Kidney (tissue), 22 donors: ENCODE measurements at regions of chr9 and their contacts with region 1.

Region 1: GRCh38 chr9:110638381-110638954 is 30.1 kb upstream of the MUSK start:
- DNase-seq: peak in 1 of 5 donors; percentile 39
- H3K4me3 ChIP-seq: no peak overlapping the region
- H3K27ac ChIP-seq: no peak overlapping the region
- H3K4me1 ChIP-seq: no peaks in the 10 kb centered on the region
- H3K27me3 ChIP-seq: no peaks in the 10 kb centered on the region
- CTCF ChIP-seq: peak; percentile 28

Region 2: GRCh38 chr9:110571801-110572485 is 66.5 kb before region 1 on chr9:
- intact Hi-C with region 1: no loop called
- DNase-seq: no peak
- H3K4me3 ChIP-seq: no peak overlapping the region
- H3K27ac ChIP-seq: no peak overlapping the region
- H3K4me1 ChIP-seq: no peaks in the 10 kb centered on the region
- H3K27me3 ChIP-seq: no peaks in the 10 kb centered on the region
- CTCF ChIP-seq: no peak

Region 3: GRCh38 chr9:111301195-111301594 is 662.7 kb after region 1 on chr9:
- intact Hi-C with region 1: loop called (anchors 10 kb)
- DNase-seq: no peak
- H3K4me3 ChIP-seq: no peak overlapping the region
- H3K27ac ChIP-seq: no peak overlapping the region
- H3K4me1 ChIP-seq: no peaks in the 10 kb centered on the region
- H3K27me3 ChIP-seq: no peaks in the 10 kb centered on the region
- CTCF ChIP-seq: no peak